ENCODE measurements at regions of chr14 and their contacts with region 1.

Region 1: GRCh38 chr14:67526676-67527459 is 6.2 kb upstream of the PLEKHH1 start:
- DNase-seq: peak; percentile 65
- ATAC-seq: peak; percentile 94
- H3K4me3 Mint-ChIP-seq: no peak overlapping the region
- H3K27ac Mint-ChIP-seq: no peak overlapping the region
- H3K4me1 Mint-ChIP-seq: no peaks in the 10 kb centered on the region
- H3K27me3 Mint-ChIP-seq: peaks cover 19% of the 10 kb centered on the region
- CTCF ChIP-seq: peak; percentile 71

Region 2: GRCh38 chr14:67435615-67436346 is 91.1 kb before region 1 on chr14:
- CTCF ChIA-PET with region 1: interaction called, 10 read pairs
- POLR2A ChIA-PET with region 1: no interaction called
- intact Hi-C with region 1: no loop called
- DNase-seq: no peak
- ATAC-seq: no peak
- H3K4me3 Mint-ChIP-seq: no peak overlapping the region
- H3K27ac Mint-ChIP-seq: no peak overlapping the region
- H3K4me1 Mint-ChIP-seq: no peaks in the 10 kb centered on the region
- H3K27me3 Mint-ChIP-seq: no peaks in the 10 kb centered on the region
- CTCF ChIP-seq: no peak

Region 3: GRCh38 chr14:67487937-67488893 is 38.7 kb before region 1 on chr14 and contains the start of gene TMEM229B:
- CTCF ChIA-PET with region 1: interaction called, 11 read pairs
- POLR2A ChIA-PET with region 1: no interaction called
- intact Hi-C with region 1: no loop called
- DNase-seq: peak; percentile 91
- ATAC-seq: peak; percentile 96
- H3K4me3 Mint-ChIP-seq: peak within 1 kb of the TSS; percentile 76
- H3K27ac Mint-ChIP-seq: peak within 1 kb of the TSS; percentile 95
- H3K4me1 Mint-ChIP-seq: peaks cover 64% of the 10 kb centered on the region
- H3K27me3 Mint-ChIP-seq: no peaks in the 10 kb centered on the region
- CTCF ChIP-seq: no peak
- total RNA-seq, gene TMEM229B: 1.6 to 2.3 TPM

Region 4: DNA sequence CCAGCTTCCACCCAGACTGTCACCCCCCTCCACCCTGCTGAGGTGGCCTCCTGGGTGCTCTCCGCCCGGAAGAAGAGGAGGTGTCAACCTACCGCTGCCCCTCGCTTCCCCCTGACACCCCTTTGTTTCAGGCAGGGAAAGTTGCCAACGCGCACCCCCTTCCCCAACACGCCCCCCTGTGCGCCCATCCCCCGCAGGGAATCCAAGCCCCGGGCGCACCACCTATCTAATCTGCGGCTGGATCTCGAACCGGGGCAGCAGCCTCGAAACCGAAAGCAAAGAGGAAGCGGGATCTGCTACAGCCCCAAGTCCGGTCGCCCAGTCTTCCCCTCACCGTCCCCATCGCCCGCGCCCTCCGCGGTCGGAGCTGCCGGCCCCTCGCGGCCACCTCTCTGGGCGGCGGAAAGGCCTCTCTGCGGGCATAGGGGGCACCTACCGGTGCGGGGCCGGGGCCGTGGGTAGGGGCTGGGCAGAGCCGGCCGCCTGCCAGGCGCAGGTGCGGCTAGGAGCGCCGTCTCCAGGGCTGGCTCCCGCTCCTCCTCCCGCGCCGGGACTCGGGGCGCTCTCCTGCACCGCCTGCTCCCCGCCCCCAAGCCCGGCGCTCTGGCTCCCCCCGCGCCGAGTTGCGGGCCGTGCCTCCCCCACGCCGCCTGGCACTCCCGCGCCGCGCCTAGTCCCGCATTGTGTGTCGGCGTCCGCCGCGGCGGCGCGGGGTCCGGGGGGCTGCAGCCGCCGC is 12.1 kb before region 1 on chr14:
- CTCF ChIA-PET with region 1: interaction called, 33 read pairs
- POLR2A ChIA-PET with region 1: interaction called, 4 read pairs
- intact Hi-C with region 1: no loop called
- DNase-seq: peak; percentile 43
- ATAC-seq: peak; percentile 63
- H3K4me3 Mint-ChIP-seq: peak overlapping the region; percentile 78
- H3K27ac Mint-ChIP-seq: peak overlapping the region; percentile 74
- H3K4me1 Mint-ChIP-seq: peaks cover 32% of the 10 kb centered on the region
- H3K27me3 Mint-ChIP-seq: peaks cover 2% of the 10 kb centered on the region
- CTCF ChIP-seq: no peak

Region 5: DNA sequence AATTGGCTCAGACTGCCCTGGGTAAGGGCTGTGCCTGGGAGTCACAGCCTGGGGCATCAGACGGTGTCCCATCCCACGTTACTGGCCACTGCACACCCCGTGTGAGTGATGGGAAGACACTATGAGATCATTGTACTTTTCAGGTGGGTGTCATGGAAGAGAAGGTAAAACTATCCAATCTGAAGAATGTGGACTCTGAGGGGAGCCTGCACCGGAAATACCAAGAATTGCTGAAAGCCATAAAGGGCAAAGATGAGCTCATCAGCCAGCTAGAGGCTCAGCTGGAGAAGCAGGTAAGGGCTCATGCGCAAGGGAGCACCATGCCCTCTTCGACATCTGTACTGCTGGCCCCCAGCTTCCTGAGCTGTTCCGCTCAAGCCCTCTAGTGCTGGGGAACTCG is 30.3 kb after region 1 on chr14:
- CTCF ChIA-PET with region 1: interaction called, 18 read pairs
- POLR2A ChIA-PET with region 1: no interaction called
- intact Hi-C with region 1: no loop called
- DNase-seq: peak; percentile 34
- ATAC-seq: peak; percentile 82
- H3K4me3 Mint-ChIP-seq: no peak overlapping the region
- H3K27ac Mint-ChIP-seq: no peak overlapping the region
- H3K4me1 Mint-ChIP-seq: peaks cover 3% of the 10 kb centered on the region
- H3K27me3 Mint-ChIP-seq: no peaks in the 10 kb centered on the region
- CTCF ChIP-seq: no peak

Region 6: DNA sequence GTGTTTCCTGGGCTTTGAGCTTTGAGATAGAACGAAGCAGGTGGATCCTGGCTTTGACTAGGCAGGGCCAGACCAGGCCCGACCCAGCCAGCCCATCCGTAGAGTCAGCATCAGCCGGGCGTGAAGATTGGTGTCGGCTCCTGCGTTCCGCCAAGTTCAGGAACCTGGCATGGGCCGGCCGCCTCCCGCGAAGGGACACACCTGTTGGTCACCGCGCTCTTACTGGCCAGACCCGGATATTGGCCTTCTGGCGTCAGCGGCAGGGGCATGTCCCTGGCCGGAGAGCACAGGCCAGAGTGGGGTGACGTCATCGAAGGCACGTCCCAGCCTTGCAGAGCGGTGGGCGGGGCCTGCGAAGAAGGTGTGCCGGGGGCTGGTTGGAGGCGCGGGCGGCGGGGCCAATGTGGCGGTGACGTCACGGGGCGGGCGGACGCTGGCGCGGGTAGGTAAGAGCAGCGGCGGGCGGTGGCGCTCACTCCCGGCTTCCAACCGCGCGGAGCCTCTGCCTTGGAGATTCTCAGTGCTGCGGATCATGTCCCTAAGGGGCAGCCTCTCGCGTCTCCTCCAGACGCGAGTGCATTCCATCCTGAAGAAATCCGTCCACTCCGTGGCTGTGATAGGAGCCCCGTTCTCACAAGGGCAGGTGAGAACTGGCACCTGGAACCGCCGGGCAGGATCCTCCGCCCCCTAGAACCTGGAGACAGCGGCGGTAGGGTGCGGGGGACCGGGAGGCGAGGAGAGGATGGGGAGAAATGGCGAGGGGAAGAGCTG is 92.8 kb after region 1 on chr14 and contains the start of gene ARG2:
- CTCF ChIA-PET with region 1: interaction called, 10 read pairs
- POLR2A ChIA-PET with region 1: no interaction called
- intact Hi-C with region 1: no loop called
- DNase-seq: peak; percentile 98
- ATAC-seq: peak; percentile 92
- H3K4me3 Mint-ChIP-seq: peak within 1 kb of the TSS; percentile 83
- H3K27ac Mint-ChIP-seq: peak within 1 kb of the TSS; percentile 78
- H3K4me1 Mint-ChIP-seq: peaks cover 27% of the 10 kb centered on the region
- H3K27me3 Mint-ChIP-seq: peaks cover 12% of the 10 kb centered on the region
- CTCF ChIP-seq: no peak
- total RNA-seq, gene ARG2: 9.9 TPM

Region 7: GRCh38 chr14:67704484-67705089 is 177.7 kb after region 1 on chr14:
- CTCF ChIA-PET with region 1: interaction called, 27 read pairs
- POLR2A ChIA-PET with region 1: no interaction called
- intact Hi-C with region 1: no loop called
- DNase-seq: peak; percentile 44
- ATAC-seq: peak; percentile 89
- H3K4me3 Mint-ChIP-seq: no peak overlapping the region
- H3K27ac Mint-ChIP-seq: no peak overlapping the region
- H3K4me1 Mint-ChIP-seq: no peaks in the 10 kb centered on the region
- H3K27me3 Mint-ChIP-seq: peaks cover 2% of the 10 kb centered on the region
- CTCF ChIP-seq: peak; percentile 72

Measured in activated CD8-positive, alpha-beta T cell treated with anti-CD3 and anti-CD28 coated beads for 36 hours (primary cell).